SK-N-SH (cell line): ENCODE measurements at regions of chr11 and their contacts with region 1.

Region 1: GRCh38 chr11:66386171-66387069 is 14.9 kb upstream of the SLC29A2 start:
- DNase-seq: peak; percentile 71
- H3K4me3 ChIP-seq: peak overlapping the region; percentile 23 to 60
- H3K27ac ChIP-seq: no peak overlapping the region
- H3K4me1 ChIP-seq: no peaks in the 10 kb centered on the region; a peak in 1 of 4 replicates
- H3K27me3 ChIP-seq: peaks cover 13% of the 10 kb centered on the region; the same call in 1 of the 2 replicates
- CTCF ChIP-seq: peak; percentile 96
- EP300 ChIP-seq: no peak
- RAD21 ChIP-seq: peak; percentile 70

Region 2: GRCh38 chr11:66336234-66337102 is 50.0 kb before region 1 on chr11 and contains the start of gene RIN1:
- CTCF ChIA-PET with region 1: interaction called, 13 read pairs
- POLR2A ChIA-PET with region 1: no interaction called
- DNase-seq: peak; percentile 94
- H3K4me3 ChIP-seq: peak within 1 kb of the TSS; percentile 68 to 69
- H3K27ac ChIP-seq: peak within 1 kb of the TSS; percentile 94
- H3K4me1 ChIP-seq: peaks cover 27 to 44% of the 10 kb centered on the region in 2 experiments
- H3K27me3 ChIP-seq: no peaks in the 10 kb centered on the region
- CTCF ChIP-seq: peak; percentile 56
- EP300 ChIP-seq: peak; percentile 47 to 78; a peak in 3 of 4 replicates
- RAD21 ChIP-seq: peak; percentile 81
- polyA plus RNA-seq, gene RIN1: 13.0 and 16.9 TPM in 2 replicates

Region 3: GRCh38 chr11:66363805-66364535 is 22.4 kb before region 1 on chr11:
- CTCF ChIA-PET with region 1: interaction called, 28 read pairs
- POLR2A ChIA-PET with region 1: no interaction called
- DNase-seq: peak; percentile 86
- H3K4me3 ChIP-seq: no peak overlapping the region
- H3K27ac ChIP-seq: no peak overlapping the region
- H3K4me1 ChIP-seq: peaks cover 0 to 7% of the 10 kb centered on the region in 2 experiments; a peak in 1 of 4 replicates
- H3K27me3 ChIP-seq: no peaks in the 10 kb centered on the region
- CTCF ChIP-seq: peak; percentile 73
- EP300 ChIP-seq: no peak
- RAD21 ChIP-seq: no peak

Region 4: DNA sequence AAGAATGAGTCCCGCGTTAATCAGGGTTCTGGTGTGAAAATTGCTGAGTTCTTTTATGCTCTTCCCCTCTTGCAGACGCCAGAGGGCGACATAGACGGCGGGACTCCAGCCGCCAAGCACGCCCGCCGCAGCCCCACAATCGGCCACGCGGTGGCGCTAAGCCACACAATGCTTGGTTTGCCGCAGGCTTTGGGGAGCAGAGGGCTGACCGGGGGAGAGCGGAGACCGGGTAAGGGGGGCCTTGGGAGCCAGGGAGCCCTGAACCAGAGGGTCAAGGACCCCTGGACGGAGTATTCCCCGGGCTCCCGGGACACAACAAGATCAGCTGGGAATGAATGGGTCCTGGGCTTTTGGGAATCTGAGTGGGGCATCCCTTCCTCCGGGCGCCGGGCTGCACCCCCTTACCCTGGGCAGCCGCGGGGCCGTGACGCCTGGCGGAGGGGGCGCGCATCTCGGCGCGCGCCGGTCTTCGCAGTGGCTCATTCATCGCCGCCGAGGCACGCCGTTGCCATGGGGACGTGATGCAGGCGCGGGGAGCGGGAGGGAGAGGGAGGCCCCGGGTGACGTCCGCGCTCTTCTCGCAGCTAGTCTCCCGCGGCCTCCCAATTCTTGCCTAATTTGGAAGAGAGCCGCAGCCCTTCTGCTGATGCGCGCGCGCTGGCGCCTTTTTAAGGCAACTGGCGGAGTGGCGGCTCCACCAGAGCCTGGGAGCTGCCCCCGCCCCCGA is 22.2 kb after region 1 on chr11:
- CTCF ChIA-PET with region 1: interaction called, 42 read pairs
- POLR2A ChIA-PET with region 1: no interaction called
- DNase-seq: peak; percentile 95
- H3K4me3 ChIP-seq: peak overlapping the region; percentile 47 to 68
- H3K27ac ChIP-seq: no peak overlapping the region
- H3K4me1 ChIP-seq: peaks cover 0 to 3% of the 10 kb centered on the region in 2 experiments; a peak in 1 of 4 replicates
- H3K27me3 ChIP-seq: peaks cover 45% of the 10 kb centered on the region
- CTCF ChIP-seq: peak; percentile 100
- EP300 ChIP-seq: no peak
- RAD21 ChIP-seq: peak; percentile 96

Region 5: DNA sequence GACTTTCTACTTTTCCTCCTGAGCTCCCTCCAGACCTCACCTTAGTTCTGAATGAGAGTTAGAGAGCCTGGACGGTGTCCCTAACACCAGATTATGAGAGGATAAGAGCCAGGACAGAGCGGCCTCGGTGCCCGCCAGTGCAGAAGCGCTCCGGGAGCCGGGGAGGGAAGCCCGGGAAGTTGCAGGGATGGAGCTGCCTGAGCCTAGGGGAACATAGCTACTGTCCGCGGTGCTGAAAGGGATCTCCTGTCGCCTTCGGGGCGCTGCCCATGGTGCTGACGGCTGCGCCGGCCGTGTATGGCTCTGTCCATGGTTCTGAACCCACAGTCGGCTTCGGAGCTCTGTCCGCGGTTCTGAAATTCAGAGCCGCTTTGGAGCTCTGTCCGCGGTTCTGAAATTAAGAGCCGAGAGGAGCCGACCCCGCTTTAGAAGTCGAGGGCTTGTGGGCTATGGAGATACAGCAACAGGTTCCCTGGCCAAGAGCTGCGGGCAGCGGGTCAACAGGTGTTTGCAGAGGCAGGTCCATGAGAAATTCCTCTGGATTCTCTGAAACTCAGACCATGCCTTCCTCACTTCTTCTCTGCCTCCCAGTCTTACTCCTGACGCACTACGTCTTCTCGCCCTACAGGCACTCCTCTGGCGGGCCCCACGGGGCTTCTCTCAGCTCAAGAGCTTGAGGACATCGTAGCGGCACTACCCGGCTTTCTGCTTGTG is 35.2 kb after region 1 on chr11:
- CTCF ChIA-PET with region 1: interaction called, 24 read pairs
- POLR2A ChIA-PET with region 1: no interaction called
- DNase-seq: peak; percentile 82
- H3K4me3 ChIP-seq: peak overlapping the region in 1 of 2 experiments; percentile 36; a peak in 1 of 4 replicates
- H3K27ac ChIP-seq: no peak overlapping the region
- H3K4me1 ChIP-seq: peaks cover 4 to 14% of the 10 kb centered on the region in 2 experiments; a peak in 2 of 4 replicates
- H3K27me3 ChIP-seq: peaks cover 24% of the 10 kb centered on the region
- CTCF ChIP-seq: no peak
- EP300 ChIP-seq: no peak
- RAD21 ChIP-seq: no peak

Region 6: GRCh38 chr11:66438504-66439466 is 52.4 kb after region 1 on chr11 and contains the start of gene MRPL11:
- CTCF ChIA-PET with region 1: interaction called, 13 read pairs
- POLR2A ChIA-PET with region 1: no interaction called
- DNase-seq: peak; percentile 98
- H3K4me3 ChIP-seq: peak within 1 kb of the TSS; percentile 78 to 87
- H3K27ac ChIP-seq: peak within 1 kb of the TSS; percentile 63 to 91
- H3K4me1 ChIP-seq: peaks cover 0 to 5% of the 10 kb centered on the region in 2 experiments; a peak in 1 of 4 replicates
- H3K27me3 ChIP-seq: peaks cover 20% of the 10 kb centered on the region; the same call in 1 of the 2 replicates
- CTCF ChIP-seq: peak; percentile 74
- EP300 ChIP-seq: no peak
- RAD21 ChIP-seq: peak; percentile 55
- polyA plus RNA-seq, gene MRPL11: 33.9 and 45.6 TPM in 2 replicates

Region 7: GRCh38 chr11:66842896-66843775 is 456.7 kb after region 1 on chr11 and contains the start of gene RCE1:
- CTCF ChIA-PET with region 1: no interaction called
- POLR2A ChIA-PET with region 1: no interaction called
- DNase-seq: peak; percentile 99
- H3K4me3 ChIP-seq: peak within 1 kb of the TSS; percentile 88 to 91
- H3K27ac ChIP-seq: peak within 1 kb of the TSS; percentile 85 to 90
- H3K4me1 ChIP-seq: peaks cover 13 to 24% of the 10 kb centered on the region in 2 experiments; a peak in 3 of 4 replicates
- H3K27me3 ChIP-seq: no peaks in the 10 kb centered on the region
- CTCF ChIP-seq: no peak
- EP300 ChIP-seq: no peak
- RAD21 ChIP-seq: no peak
- polyA plus RNA-seq, gene RCE1: 25.0 and 25.4 TPM in 2 replicates